ENCODE measurements at regions of chr13 and their contacts with region 1.

Region 1: DNA sequence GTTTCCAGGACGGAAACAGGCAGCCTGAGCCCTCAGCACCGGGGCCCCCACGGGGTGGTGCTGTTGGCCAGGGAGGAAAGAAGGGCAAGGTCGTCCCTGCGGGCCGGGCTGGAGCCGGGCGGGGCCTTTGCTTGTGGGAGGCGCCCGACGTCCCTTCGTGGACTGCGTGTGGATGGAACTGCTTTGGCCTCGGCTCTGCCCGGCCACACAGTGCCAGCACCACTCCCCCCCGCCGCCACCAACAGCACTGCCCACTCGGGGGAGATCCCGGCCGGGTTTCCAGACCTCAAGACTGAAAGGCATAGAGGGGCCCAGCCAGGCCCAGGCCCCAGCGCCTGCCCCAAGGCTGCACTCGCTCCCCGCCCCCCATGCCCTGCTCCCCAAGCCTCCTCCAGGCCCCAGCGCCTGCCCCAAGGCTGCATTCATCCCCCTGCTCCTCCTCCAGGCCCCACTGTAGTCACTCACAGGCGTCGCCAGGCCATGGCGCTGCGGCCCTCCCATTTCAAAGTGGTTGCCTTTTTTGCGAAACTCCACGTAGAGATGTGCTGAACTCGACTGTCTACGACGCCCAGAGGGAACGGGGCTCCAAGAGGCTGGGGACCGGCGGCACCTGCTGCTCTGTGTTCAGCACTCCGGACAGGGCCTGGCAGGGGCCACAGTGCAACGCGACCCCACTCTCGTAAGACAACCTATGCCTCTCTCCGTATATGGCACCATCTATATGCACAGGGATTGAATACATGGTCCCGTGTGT is 22.5 kb downstream of the C13orf46 start:
- DNase-seq: peak in 2 of 5 donors; percentile 31 to 36
- H3K4me3 ChIP-seq: no peak overlapping the region
- H3K4me3 Mint-ChIP-seq: peak overlapping the region in 3 of 8 donors; percentile 13 to 31 (median 25)
- H3K27ac ChIP-seq: no peak overlapping the region
- H3K27ac Mint-ChIP-seq: peak overlapping the region in 2 of 7 donors; percentile 22 to 63
- H3K4me1 ChIP-seq: no peaks in the 10 kb centered on the region
- H3K4me1 Mint-ChIP-seq: peaks cover 0 to 14% (median 5%) of the 10 kb centered on the region in 4 donors
- H3K27me3 ChIP-seq: no peaks in the 10 kb centered on the region
- H3K27me3 Mint-ChIP-seq: no peaks in the 10 kb centered on the region

Region 2: DNA sequence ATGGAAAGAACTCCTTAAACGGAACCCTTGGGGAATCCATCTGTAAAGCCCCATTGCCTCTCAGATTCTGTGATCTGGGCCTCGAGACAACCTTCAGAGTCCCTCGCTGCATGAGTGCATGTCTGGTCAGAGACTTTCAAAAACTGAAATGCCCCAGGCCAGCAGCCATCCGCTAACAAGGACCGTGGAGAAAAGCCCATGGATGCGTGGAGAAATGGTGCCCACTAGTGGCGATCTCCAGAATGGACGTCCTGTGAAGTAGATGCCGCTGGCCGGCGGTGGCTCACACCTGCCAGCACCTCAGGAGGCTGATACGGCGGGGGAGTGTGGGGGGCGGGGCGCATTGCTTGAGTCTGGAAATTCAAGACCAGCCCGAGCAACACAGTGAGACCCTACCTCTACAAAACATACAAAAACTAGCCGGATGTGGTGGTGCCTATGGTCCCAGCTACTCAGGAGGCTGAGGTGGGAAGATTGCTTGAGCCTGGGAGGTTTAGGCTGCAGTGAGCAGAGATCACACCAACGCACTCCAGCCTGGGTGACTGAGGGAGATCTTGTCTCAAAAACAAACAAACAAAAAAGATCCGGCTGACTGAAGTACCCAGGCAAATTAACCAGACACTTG is 275.4 kb after region 1 on chr13:
- CTCF ChIA-PET with region 1: interaction called, 3 read pairs
- POLR2A ChIA-PET with region 1: no interaction called
- intact Hi-C with region 1: loop called (anchors 1 kb)
- DNase-seq: peak; percentile 75 to 80 (median 78)
- H3K4me3 ChIP-seq: no peak overlapping the region
- H3K4me3 Mint-ChIP-seq: peak overlapping the region; percentile 7 to 74 (median 48)
- H3K27ac ChIP-seq: no peak overlapping the region
- H3K27ac Mint-ChIP-seq: peak overlapping the region; percentile 69 to 89 (median 78)
- H3K4me1 ChIP-seq: peaks cover 34% of the 10 kb centered on the region
- H3K4me1 Mint-ChIP-seq: peaks cover 26 to 45% (median 36%) of the 10 kb centered on the region in 4 donors
- H3K27me3 ChIP-seq: no peaks in the 10 kb centered on the region
- H3K27me3 Mint-ChIP-seq: peaks cover 3% of the 10 kb centered on the region in 2 donors